ENCODE measurements at regions of chr4 and their contacts with region 1.

Region 1: GRCh38 chr4:145936142-145936996 is 2.3 kb downstream of the ZNF827 start:
- DNase-seq: peak; percentile 41
- H3K4me3 Mint-ChIP-seq: peak overlapping the region; percentile 95
- H3K27ac Mint-ChIP-seq: peak overlapping the region; percentile 96
- H3K4me1 Mint-ChIP-seq: peaks cover 48% of the 10 kb centered on the region
- H3K27me3 Mint-ChIP-seq: peaks cover 3% of the 10 kb centered on the region

Region 2: GRCh38 chr4:145097821-145098674 is 838.3 kb before region 1 on chr4 and contains the starts of genes ABCE1 and ANAPC10:
- intact Hi-C with region 1: loop called (anchors 2 kb)
- DNase-seq: peak; percentile 94
- H3K4me3 Mint-ChIP-seq: peak within 1 kb of the TSS; percentile 92
- H3K27ac Mint-ChIP-seq: peak within 1 kb of the TSS; percentile 100
- H3K4me1 Mint-ChIP-seq: peaks cover 27% of the 10 kb centered on the region
- H3K27me3 Mint-ChIP-seq: no peaks in the 10 kb centered on the region
- total RNA-seq, gene ABCE1: 155 and 176 TPM in 2 replicates
- total RNA-seq, gene ANAPC10: 25.4 and 32.1 TPM in 2 replicates

Region 3: GRCh38 chr4:145719752-145720624 is 216.4 kb before region 1 on chr4:
- intact Hi-C with region 1: no loop called
- DNase-seq: no peak
- H3K4me3 Mint-ChIP-seq: no peak overlapping the region
- H3K27ac Mint-ChIP-seq: peak overlapping the region; percentile 13
- H3K4me1 Mint-ChIP-seq: peaks cover 15% of the 10 kb centered on the region
- H3K27me3 Mint-ChIP-seq: peaks cover 2% of the 10 kb centered on the region

Region 4: GRCh38 chr4:145732895-145733880 is 203.2 kb before region 1 on chr4:
- intact Hi-C with region 1: loop called (anchors 2 kb)
- DNase-seq: peak; percentile 82
- H3K4me3 Mint-ChIP-seq: peak overlapping the region; percentile 79
- H3K27ac Mint-ChIP-seq: peak overlapping the region; percentile 24
- H3K4me1 Mint-ChIP-seq: peaks cover 10% of the 10 kb centered on the region
- H3K27me3 Mint-ChIP-seq: peaks cover 3% of the 10 kb centered on the region

Region 5: GRCh38 chr4:145868637-145869409 is 67.5 kb before region 1 on chr4:
- intact Hi-C with region 1: loop called (anchors 5 kb)
- DNase-seq: no peak
- H3K4me3 Mint-ChIP-seq: no peak overlapping the region
- H3K27ac Mint-ChIP-seq: no peak overlapping the region
- H3K4me1 Mint-ChIP-seq: peaks cover 39% of the 10 kb centered on the region
- H3K27me3 Mint-ChIP-seq: no peaks in the 10 kb centered on the region

Region 6: DNA sequence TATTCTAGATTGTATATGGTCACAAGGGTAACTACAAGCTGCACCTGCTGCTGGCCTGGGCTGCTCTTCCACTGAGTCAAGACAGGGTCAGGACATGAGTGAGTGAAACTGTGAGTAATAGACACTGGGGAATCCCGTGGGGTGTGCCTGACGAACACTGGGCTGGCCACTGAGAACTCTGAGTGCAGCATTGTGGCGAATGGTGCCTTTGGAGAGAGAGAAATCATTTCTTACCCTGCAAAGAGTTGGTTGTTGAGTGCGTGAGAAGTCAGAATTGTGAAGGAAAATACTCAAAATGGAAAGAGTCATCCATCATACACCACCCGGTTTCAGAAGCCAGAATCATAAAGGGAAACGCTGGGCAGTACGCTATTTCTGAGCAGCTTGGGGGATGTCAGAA is 196.1 kb after region 1 on chr4:
- intact Hi-C with region 1: loop called (anchors 1 kb)
- DNase-seq: peak; percentile 28
- H3K4me3 Mint-ChIP-seq: no peak overlapping the region
- H3K27ac Mint-ChIP-seq: peak overlapping the region; percentile 61
- H3K4me1 Mint-ChIP-seq: peaks cover 20% of the 10 kb centered on the region
- H3K27me3 Mint-ChIP-seq: peaks cover 8% of the 10 kb centered on the region

Region 7: DNA sequence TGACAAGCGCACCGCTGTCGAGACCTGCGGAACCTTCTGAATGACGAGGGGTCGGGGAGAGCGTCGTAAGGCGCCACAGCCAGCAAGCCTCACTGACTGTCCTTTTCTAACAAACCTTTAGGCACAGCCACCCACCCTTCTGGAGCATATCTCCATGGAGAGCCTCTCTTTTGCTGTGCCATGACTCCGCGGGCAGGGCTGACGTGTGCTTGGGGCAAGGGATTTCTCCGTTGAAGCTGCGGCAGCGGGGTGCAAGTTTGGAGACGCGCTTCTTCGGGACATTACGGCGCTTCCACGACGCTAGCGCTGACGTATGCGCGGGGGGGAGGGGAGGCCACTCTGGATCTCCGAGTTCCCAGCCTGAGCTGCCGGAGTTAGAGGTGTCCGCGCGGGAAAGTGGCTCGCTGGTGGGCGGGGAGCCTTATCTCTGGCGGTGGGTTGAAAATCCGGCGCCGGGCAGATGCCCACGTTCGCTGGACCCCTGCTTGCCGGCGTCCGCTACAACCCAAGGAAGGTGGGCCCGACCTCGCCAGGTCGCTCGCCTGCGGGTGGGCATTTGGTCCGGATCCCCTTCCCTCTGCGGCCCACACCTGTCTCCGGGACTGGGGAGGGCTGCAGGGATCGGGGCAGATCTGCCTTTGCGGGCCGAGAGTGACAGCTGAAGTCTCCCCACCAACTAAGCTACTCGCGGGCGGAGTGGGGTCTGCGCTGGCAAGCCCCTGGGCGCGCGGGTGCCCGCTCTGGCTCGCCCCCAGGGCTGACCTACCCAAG is 585.9 kb after region 1 on chr4:
- intact Hi-C with region 1: loop called (anchors 5 kb)
- DNase-seq: peak; percentile 79
- H3K4me3 Mint-ChIP-seq: no peak overlapping the region
- H3K27ac Mint-ChIP-seq: no peak overlapping the region
- H3K4me1 Mint-ChIP-seq: peaks cover 31% of the 10 kb centered on the region
- H3K27me3 Mint-ChIP-seq: no peaks in the 10 kb centered on the region